Ascending aorta (tissue), 2 donors: ENCODE measurements at regions of chr5 and their contacts with region 1.

Region 1: GRCh38 chr5:159752622-159753275 is 163.5 kb upstream of the ADRA1B start:
- DNase-seq: peak in 1 of 2 donors; percentile 85
- H3K4me3 ChIP-seq: no peak overlapping the region
- H3K27ac ChIP-seq: peak overlapping the region; percentile 90
- H3K4me1 ChIP-seq: peaks cover 0 to 50% of the 10 kb centered on the region in 2 donors
- H3K27me3 ChIP-seq: no peaks in the 10 kb centered on the region
- CTCF ChIP-seq: no peak

Region 2: DNA sequence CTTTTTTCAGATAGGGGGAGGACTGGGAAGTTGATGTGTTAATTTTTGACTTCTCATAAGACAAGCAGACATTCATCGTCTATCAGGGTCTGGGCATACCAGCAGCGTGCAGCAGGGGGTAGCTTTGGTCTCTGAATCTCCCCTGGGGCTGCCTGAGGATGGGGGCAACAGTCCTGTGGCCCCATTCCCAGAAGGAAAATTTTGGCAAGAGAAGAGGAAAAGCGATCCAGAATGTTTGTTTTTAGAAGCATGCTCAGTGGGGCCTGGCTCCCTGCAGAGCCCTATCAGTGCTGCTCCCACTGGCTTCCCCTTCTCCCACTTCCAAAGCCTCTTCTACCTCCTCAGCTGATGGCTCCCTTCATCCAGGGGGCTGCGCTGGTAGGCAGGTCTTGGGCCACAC is 227.6 kb before region 1 on chr5:
- intact Hi-C with region 1: loop called (anchors 5 kb)
- DNase-seq: no peak
- H3K4me3 ChIP-seq: no peak overlapping the region
- H3K27ac ChIP-seq: peak overlapping the region in 1 of 2 donors; percentile 19
- H3K4me1 ChIP-seq: peaks cover 4% of the 10 kb centered on the region in 2 donors
- H3K27me3 ChIP-seq: no peaks in the 10 kb centered on the region
- CTCF ChIP-seq: no peak